ENCODE measurements at regions of chr2 and their contacts with region 1.

Region 1: DNA sequence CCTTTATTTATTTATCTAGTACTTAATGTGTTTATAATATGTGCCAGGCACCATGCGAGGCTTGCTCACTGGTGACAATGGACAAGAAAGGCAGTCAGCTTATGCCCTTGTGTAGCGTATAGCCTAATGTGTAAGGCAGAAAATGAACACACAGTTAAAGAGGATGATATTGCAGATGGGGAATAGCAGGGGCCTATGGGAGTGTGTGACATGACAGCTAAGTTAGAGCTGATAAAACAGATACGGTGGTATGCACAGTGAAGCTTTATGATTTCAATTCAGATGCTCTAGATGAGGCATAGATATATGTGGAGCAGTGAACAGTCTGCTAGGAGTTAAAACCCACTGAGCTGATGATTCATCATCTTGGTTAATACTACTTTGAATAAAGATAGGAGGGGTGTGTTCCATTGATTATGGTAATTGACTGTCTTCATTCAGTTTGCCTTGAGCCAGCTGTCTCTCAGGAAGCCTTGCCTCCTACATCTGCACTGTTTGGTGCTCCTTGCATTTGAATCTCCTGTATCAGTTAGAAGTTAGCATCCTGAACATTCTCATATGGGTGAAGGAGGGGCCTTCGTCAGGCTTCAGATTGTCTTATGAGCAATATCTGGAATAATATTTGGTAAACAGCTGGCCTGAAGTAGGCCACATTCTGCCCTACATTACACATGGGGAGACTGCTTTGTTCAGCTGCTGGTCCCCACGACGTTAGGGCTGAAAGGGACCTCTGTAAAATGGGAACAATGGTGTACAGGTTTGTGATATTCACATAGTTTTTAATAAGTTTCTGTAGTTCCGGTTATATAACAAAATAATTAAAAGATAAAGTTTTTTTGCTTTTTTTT is 13.2 kb downstream of the MAP4K4 start:
- DNase-seq: no peak
- ATAC-seq: peak in 3 of 4 donors; percentile 28 to 54 (median 38)
- H3K4me3 ChIP-seq: no peak overlapping the region
- H3K27ac ChIP-seq: no peak overlapping the region
- H3K4me1 ChIP-seq: peaks cover 9 to 31% (median 22%) of the 10 kb centered on the region in 3 donors
- H3K27me3 ChIP-seq: no peaks in the 10 kb centered on the region
- CTCF ChIP-seq: no peak

Region 2: DNA sequence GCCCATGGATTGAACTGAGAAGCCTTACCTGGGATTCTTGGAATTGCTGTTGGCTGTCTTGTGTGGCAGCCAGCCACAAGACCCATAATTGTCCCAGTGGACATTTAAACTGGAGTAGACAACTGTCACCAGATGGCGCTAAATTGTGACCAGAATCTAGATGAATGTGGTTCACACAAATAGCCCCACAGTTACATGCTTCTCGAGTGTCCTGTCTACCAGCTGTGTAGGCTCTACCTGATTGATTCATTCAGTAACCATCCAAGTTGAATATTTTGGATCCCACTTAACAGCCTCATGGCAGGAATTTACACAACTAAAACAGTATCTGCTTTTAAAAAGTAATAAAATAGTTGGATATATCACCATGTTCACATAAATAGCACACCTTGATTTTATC is 60.0 kb after region 1 on chr2:
- intact Hi-C with region 1: no loop called
- DNase-seq: no peak
- ATAC-seq: peak in 3 of 4 donors; percentile 42 to 52 (median 49)
- H3K4me3 ChIP-seq: no peak overlapping the region
- H3K27ac ChIP-seq: no peak overlapping the region
- H3K4me1 ChIP-seq: peaks cover 14 to 21% (median 14%) of the 10 kb centered on the region in 3 donors
- H3K27me3 ChIP-seq: no peaks in the 10 kb centered on the region
- CTCF ChIP-seq: no peak

Region 3: DNA sequence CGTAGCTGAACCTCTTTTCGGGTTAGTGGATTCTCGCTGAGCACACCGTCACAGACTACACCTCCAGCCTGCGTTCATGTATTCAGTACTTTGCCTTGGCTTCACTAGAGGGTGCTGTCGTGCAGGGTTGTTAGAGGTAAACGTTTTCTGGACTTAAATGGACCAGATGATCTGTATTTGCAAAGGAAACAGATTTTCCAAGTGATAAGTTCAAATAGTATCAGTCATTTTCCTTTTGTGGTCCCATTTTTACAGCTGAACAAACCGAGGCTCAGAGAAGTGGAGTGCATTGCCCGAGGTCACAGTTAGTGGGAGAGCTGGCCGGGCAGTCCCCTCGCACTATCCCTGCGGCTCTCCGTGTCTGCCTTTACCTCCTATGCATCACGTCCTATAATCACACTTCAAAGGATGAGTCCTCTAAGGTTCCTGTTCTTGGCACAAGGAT is 112.7 kb after region 1 on chr2:
- intact Hi-C with region 1: loop called in 1 of 3 experiments (anchors 10 kb)
- DNase-seq: peak in 4 of 6 donors; percentile 38 to 67 (median 54)
- ATAC-seq: peak; percentile 79 to 94 (median 90)
- H3K4me3 ChIP-seq: no peak overlapping the region
- H3K27ac ChIP-seq: no peak overlapping the region
- H3K4me1 ChIP-seq: peaks cover 0 to 5% (median 2%) of the 10 kb centered on the region in 3 donors
- H3K27me3 ChIP-seq: no peaks in the 10 kb centered on the region
- CTCF ChIP-seq: peak; percentile 28 to 49 (median 44)

Measured in pancreas (tissue), 10 donors.